ENCODE measurements at regions of chr6 and their contacts with region 1.

Region 1: DNA sequence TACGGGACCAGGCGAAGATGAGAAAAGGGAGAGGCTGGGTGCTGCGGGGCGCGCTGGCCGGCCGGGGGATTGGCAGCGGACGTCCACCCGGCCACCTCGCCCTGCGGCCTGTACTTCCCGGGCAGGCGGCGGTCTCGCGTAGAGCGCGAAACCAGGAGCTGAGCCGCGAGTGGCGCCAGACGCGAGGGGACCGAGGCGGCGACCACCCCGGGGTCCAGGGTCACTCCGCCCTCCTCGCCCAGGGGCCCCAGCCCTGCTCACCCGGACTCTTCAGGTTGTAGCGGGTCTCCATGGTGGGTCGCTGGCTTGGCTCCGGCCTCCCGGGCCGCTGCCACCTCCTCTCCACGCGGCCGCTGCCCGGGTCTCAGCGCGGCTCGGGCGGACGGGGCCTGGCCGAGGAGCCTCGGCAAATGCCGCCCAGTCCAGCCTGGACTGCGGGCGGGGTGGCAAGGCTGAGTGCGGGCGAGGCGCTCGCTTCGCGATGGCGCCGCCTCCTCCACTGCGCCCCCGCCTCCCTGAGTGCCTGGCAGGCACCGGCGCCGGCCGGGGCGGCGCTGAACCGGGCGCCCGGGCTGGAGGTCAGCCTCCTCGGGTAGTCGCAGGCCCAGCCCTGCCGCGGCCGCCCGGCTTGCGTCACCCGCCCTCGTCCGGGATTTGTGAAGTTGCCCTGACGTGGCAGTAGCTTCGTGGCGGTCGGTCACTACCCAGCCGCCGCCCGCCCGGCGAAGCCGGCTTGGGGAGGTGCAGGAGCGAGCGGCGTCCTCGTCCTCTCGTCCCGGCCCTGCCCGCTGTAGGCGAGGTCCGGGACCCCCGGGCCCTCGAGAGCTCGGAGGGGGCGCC is at the start of gene UBE2J1:
- DNase-seq: peak; percentile 95 to 98 (median 97)
- ATAC-seq: peak; percentile 90 to 98 (median 96)
- H3K4me3 ChIP-seq: peak within 1 kb of the TSS; percentile 73 to 99 (median 88)
- H3K27ac ChIP-seq: peak within 1 kb of the TSS; percentile 95 to 100 (median 98)
- H3K4me1 ChIP-seq: peaks cover 0 to 57% (median 38%) of the 10 kb centered on the region in 12 donors
- H3K27me3 ChIP-seq: no peaks in the 10 kb centered on the region
- CTCF ChIP-seq: peak in 2 of 12 donors; percentile 7 to 9
- POLR2A ChIP-seq: peak; percentile 84 to 94
- total RNA-seq, gene UBE2J1: 9.8 to 28.2 (median 15.2) TPM

Region 2: GRCh38 chr6:89122625-89123024 is 229.9 kb before region 1 on chr6:
- intact Hi-C with region 1: loop called in 1 of 10 experiments (anchors 10 kb)
- DNase-seq: no peak
- ATAC-seq: peak; percentile 53 to 81 (median 60)
- H3K4me3 ChIP-seq: no peak overlapping the region
- H3K27ac ChIP-seq: no peak overlapping the region
- H3K4me1 ChIP-seq: peaks cover 0 to 5% (median 0%) of the 10 kb centered on the region in 12 donors
- H3K27me3 ChIP-seq: no peaks in the 10 kb centered on the region
- CTCF ChIP-seq: peak; percentile 22 to 65 (median 54)
- POLR2A ChIP-seq: no peak

Region 3: DNA sequence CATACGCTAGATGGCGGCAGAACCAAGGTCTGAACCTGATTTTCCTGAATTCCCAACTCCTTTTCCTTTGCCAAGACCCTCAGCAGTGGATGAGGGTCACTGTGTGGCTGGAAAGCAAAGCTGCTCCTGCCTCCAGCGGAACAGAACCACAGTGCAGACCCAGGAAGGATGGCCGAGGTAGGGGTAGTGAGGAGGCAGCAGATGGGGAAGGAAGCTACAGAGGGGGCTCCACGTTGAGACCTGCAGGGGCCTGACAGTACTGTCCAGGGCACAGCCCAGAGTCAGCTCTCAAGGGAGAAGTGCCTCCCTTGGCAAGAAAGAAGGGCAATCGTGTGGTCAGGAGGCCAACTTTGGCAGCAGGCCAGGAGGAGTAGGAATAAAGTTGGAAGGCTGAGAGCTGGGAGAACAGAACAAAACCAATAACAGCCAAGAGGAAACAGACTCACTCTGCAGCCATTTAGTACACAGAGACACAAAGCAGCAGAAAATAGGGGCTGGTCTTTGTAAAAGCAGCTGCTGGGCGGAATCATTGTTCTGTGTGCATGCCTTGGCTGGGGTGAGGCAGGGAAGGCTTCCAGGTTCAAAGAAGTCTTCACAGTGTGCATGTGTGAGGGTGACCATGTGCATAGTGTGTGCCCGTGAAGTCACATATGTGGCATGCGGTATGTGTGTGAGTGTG is 40.5 kb before region 1 on chr6:
- intact Hi-C with region 1: loop called in 7 of 10 experiments (anchors 2 to 5 kb)
- DNase-seq: peak; percentile 62 to 78 (median 68)
- ATAC-seq: peak; percentile 52 to 79 (median 74)
- H3K4me3 ChIP-seq: peak overlapping the region in 5 of 12 donors; percentile 18 to 37 (median 31)
- H3K27ac ChIP-seq: peak overlapping the region in 11 of 12 donors; percentile 55 to 79 (median 70)
- H3K4me1 ChIP-seq: peaks cover 7 to 41% (median 25%) of the 10 kb centered on the region in 12 donors
- H3K27me3 ChIP-seq: no peaks in the 10 kb centered on the region
- CTCF ChIP-seq: peak in 11 of 12 donors; percentile 41 to 73 (median 56)
- POLR2A ChIP-seq: no peak

Region 4: DNA sequence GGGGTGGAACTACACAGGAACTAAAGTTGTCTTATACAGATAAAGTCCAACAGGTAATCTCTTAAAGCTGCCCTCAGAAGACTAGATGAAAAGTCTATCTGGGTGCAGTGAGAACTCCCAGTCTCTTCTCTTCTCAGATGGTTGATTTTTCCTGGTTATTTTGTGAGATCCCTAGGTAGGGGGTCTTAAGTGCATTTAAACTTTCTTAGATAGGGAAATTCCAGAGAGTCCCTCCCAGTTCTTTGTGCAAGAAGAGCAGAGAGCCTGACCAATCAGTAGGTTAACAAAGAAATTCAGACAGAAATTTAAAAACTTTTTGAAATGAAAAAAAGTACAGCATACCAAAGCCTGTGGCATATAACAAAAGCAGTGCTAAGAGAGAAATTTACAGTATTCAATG is 35.4 kb before region 1 on chr6:
- intact Hi-C with region 1: loop called in 7 of 10 experiments (anchors 2 to 5 kb)
- DNase-seq: no peak
- ATAC-seq: no peak
- H3K4me3 ChIP-seq: no peak overlapping the region
- H3K27ac ChIP-seq: no peak overlapping the region
- H3K4me1 ChIP-seq: peaks cover 7 to 33% (median 16%) of the 10 kb centered on the region in 12 donors
- H3K27me3 ChIP-seq: no peaks in the 10 kb centered on the region
- CTCF ChIP-seq: no peak
- POLR2A ChIP-seq: no peak

Region 5: DNA sequence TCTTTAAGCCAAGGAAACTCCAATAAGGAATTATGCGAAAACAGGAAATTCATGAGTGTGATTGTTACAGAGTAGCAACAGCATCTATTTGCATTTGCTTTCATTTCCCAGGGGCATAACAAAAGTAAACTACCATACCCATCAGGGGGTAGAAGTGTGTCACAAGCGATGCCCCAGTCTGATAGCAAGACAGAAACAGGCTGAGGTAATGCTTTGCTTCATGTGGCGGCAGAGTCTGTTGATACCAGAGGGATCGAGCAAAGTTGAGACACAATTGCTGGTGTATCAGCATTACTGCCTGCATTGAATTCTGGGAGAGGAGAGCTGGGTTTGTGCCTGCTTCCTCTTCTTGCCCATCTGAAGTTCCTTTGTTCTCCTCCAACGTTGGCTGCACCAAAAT is 337.2 kb after region 1 on chr6:
- intact Hi-C with region 1: no loop called
- DNase-seq: peak in 1 of 5 donors; percentile 34
- ATAC-seq: peak in 3 of 4 donors; percentile 49 to 78 (median 69)
- H3K4me3 ChIP-seq: peak overlapping the region in 2 of 12 donors; percentile 27 to 36
- H3K27ac ChIP-seq: peak overlapping the region in 8 of 12 donors; percentile 1 to 75 (median 44)
- H3K4me1 ChIP-seq: peaks cover 0 to 20% (median 8%) of the 10 kb centered on the region in 12 donors
- H3K27me3 ChIP-seq: no peaks in the 10 kb centered on the region
- CTCF ChIP-seq: no peak
- POLR2A ChIP-seq: no peak

Region 6: GRCh38 chr6:90643381-90643780 is 1290.9 kb after region 1 on chr6:
- intact Hi-C with region 1: no loop called
- DNase-seq: no peak
- ATAC-seq: no peak
- H3K4me3 ChIP-seq: no peak overlapping the region
- H3K27ac ChIP-seq: no peak overlapping the region
- H3K4me1 ChIP-seq: no peaks in the 10 kb centered on the region
- H3K27me3 ChIP-seq: no peaks in the 10 kb centered on the region
- CTCF ChIP-seq: no peak
- POLR2A ChIP-seq: no peak

Measured in heart left ventricle (tissue), 16 donors.